Left ventricle myocardium inferior (tissue), 1 donor: ENCODE measurements at regions of chr10 and their contacts with region 1.

Region 1: GRCh38 chr10:113385021-113385999 is 167.5 kb upstream of the HABP2 start:
- DNase-seq: peak; percentile 84
- H3K4me3 ChIP-seq: peak overlapping the region; percentile 22
- H3K27ac ChIP-seq: peak overlapping the region; percentile 63
- H3K4me1 ChIP-seq: peaks cover 20% of the 10 kb centered on the region
- H3K27me3 ChIP-seq: peaks cover 20% of the 10 kb centered on the region
- CTCF ChIP-seq: peak; percentile 87

Region 2: DNA sequence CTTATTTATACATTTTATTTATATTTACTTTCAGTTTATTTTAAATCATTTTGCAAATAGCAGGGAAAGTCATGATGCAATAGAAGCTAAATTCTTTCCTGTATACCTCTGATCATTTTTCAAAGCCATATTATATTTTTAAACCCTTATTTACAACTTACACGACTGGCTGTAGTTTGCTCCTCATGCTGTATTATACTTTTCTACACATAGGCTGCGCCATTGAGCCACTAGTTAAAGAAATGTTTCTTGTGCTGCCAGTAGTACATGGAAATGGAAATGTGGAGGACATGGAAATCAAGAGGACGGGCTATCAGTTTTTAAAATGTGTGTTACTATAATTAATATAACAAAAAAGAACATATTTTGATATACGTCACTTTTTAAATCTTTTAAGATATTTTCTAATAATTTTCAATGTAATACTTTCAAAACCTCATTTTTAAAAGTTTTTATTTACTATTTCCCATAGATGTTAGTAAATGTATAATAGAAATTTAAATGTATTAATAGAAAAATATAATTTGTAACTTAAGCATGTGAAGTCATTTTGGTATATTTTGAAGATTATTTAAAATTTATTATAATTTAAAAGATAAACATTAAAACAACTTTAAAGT is 819.8 kb before region 1 on chr10:
- intact Hi-C with region 1: loop called (anchors 10 kb)
- DNase-seq: no peak
- H3K4me3 ChIP-seq: no peak overlapping the region
- H3K27ac ChIP-seq: no peak overlapping the region
- H3K4me1 ChIP-seq: no peaks in the 10 kb centered on the region
- H3K27me3 ChIP-seq: no peaks in the 10 kb centered on the region
- CTCF ChIP-seq: peak; percentile 73

Region 3: DNA sequence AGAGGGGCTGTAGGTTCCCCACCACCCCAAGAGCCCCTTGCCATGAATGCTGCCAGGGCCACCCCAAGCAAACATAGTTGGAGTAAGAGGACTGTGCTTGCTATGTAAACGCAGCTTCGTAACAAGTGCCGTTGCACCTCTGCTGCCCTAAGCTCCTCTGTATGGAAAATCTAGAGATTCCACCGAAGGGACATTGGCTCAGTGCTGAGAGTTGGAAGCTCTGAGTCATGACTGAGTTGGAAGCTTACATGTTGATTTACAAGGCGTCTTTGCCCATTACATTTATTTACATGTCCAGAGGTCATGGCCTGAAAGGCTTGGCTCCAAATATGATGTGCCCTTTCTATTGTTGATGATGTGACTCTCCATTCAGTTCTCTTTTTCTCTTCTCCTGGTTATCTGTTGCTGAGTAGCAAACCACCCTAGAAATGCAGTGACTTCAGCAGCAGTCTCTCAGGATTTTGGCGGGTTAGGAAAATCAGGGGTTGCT is 668.3 kb before region 1 on chr10:
- intact Hi-C with region 1: loop called (anchors 10 kb)
- DNase-seq: no peak
- H3K4me3 ChIP-seq: no peak overlapping the region
- H3K27ac ChIP-seq: no peak overlapping the region
- H3K4me1 ChIP-seq: no peaks in the 10 kb centered on the region
- H3K27me3 ChIP-seq: no peaks in the 10 kb centered on the region
- CTCF ChIP-seq: no peak

Region 4: GRCh38 chr10:113126229-113127201 is 258.8 kb before region 1 on chr10:
- intact Hi-C with region 1: loop called (anchors 10 kb)
- DNase-seq: peak; percentile 74
- H3K4me3 ChIP-seq: peak overlapping the region; percentile 55
- H3K27ac ChIP-seq: peak overlapping the region; percentile 70
- H3K4me1 ChIP-seq: peaks cover 10% of the 10 kb centered on the region
- H3K27me3 ChIP-seq: no peaks in the 10 kb centered on the region
- CTCF ChIP-seq: peak; percentile 90

Region 5: DNA sequence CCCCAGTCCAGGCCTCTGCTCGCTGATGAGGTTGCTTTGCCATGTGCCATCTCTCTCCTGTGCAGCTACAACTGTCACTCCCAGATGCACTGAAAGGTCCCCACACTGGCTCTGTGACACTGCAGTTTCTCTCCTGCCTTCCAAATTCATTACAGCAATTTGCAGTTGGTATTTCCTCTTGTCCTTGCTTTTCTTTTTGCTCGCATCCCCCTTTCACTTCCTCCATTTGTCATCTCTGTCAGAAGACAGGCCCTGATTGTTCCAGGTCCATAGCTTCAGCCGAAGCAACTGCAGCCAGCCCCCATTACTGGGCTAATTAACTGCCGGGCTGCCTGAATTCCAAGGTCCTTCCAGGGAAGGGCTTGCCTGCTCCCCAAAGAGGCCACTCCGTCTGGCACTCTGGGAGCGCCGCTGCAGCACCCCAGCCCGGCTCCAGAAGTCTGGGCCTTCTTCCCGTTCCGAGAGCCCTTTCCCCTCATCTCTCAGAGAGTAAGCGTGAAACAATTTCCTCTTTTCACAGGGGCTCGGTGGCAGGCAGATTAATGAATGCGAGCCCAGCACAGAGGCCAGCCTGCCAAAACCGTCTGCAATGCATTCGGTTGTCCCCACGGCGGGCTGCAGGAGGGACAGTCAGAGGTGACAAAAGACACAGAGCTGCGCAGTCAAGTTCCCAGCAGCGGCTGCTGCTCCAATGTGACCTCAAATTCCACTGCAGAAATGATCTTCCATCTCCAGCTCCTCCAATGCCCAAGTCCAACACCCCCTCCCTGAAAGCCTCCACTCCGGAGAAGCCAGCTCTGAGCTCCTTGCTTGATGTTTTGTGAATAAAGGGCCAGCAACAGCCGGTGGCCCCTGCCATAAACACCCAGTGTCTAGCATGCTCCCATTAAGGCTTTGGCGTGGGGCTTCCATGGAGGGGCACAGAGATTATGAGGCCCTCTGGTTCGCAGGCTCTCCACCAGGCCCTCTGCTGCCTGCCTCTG is 111.8 kb before region 1 on chr10:
- intact Hi-C with region 1: no loop called
- DNase-seq: peak; percentile 57
- H3K4me3 ChIP-seq: peak overlapping the region; percentile 21
- H3K27ac ChIP-seq: peak overlapping the region; percentile 81
- H3K4me1 ChIP-seq: peaks cover 19% of the 10 kb centered on the region
- H3K27me3 ChIP-seq: peaks cover 6% of the 10 kb centered on the region
- CTCF ChIP-seq: no peak